ENCODE measurements at regions of chr16 and their contacts with region 1.

Region 1: DNA sequence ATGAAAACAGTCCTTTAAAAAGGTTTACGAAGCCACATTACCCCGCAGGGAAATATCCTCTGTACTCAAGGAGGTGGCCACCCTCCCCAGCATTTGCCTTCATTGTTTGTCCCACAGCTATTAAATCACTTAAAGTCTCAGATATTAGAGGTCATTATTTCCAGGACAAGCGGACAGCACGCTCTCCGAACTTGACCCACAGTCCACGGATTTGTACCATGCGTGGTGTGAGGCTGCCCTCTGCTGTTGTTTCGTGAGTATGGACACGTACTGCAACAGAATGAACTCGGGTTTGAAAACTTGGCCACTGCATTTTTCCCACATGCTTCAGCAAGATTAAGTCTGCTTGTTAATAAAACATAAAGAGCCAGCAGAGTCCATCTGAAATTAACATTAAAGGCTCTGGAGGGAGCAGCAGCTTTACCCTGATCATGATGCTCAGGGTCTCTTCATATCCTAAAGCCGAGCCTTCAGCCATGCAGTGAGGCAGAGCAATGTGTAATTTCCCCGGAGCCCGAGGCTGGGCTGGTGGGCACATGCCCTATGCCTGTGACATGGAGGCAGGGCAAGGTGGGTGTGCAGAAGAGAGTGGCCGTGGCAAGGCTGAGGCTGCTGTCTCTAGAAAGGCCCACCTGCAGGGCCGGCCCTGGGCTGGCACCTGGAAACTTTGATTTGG is 19.7 kb downstream of the MEAK7 start:
- DNase-seq: peak; percentile 66 to 76
- ATAC-seq: peak; percentile 67 to 89 (median 84)
- H3K4me3 ChIP-seq: no peak overlapping the region
- H3K27ac ChIP-seq: no peak overlapping the region
- H3K4me1 ChIP-seq: peaks cover 0 to 21% (median 0%) of the 10 kb centered on the region in 9 donors
- H3K27me3 ChIP-seq: no peaks in the 10 kb centered on the region
- CTCF ChIP-seq: peak; percentile 62 to 92 (median 86)

Region 2: DNA sequence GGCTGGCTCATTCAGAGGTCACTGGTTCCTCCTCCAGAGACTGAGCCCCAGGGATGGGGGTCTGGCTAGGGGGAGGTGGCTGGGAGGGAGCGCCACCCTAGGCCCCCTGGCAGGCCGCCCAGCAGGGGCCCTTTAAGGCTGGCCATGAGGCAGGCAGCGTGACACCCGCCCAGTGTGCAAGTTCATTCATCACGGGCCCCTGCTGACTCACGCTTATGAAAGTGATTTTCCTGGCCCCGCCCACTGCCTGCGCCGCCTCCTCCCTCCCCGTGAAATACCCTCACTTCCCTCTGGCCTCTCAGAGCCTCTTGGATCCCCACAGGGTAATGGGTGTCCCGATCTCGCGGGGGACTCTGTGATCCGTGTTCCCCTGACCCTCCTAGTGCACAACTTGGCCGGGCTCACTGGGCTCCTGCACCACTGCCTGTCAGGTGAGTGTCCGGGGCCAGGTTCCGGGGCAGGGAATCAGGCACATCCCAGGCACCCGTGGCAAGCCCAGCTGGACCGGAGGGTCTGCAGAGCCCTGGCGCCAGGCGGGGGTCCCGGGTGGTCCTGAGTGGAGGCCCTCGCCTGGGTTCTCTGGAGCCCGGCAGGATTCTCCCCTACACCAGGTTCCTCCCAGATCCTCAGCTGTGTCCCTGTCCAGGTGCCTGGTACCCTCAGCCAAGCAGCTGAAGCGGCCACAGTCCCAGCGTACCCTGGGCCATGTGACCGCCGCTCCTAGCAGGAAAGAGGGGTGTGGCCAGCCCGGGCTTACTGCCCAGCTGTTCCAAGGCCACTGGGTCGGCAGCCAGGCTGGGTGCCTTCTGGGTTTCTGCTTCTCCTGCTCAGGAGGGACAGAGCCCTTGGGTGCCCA is 531.5 kb before region 1 on chr16 and contains the start of gene OSGIN1:
- intact Hi-C with region 1: loop called in 3 of 10 experiments (anchors 10 kb)
- DNase-seq: peak; percentile 90 to 94
- ATAC-seq: peak; percentile 90 to 96 (median 94)
- H3K4me3 ChIP-seq: peak within 1 kb of the TSS; percentile 43 to 73 (median 63)
- H3K27ac ChIP-seq: peak within 1 kb of the TSS; percentile 78 to 97 (median 92)
- H3K4me1 ChIP-seq: peaks cover 11 to 45% (median 31%) of the 10 kb centered on the region in 9 donors
- H3K27me3 ChIP-seq: no peaks in the 10 kb centered on the region
- CTCF ChIP-seq: no peak
- total RNA-seq, gene OSGIN1: 3.2 to 14.5 (median 5.3) TPM

Region 3: GRCh38 chr16:84084570-84085270 is 400.0 kb before region 1 on chr16:
- intact Hi-C with region 1: loop called in 2 of 10 experiments (anchors 10 kb)
- DNase-seq: peak; percentile 43 to 64
- ATAC-seq: peak in 7 of 8 donors; percentile 9 to 50 (median 40)
- H3K4me3 ChIP-seq: no peak overlapping the region
- H3K27ac ChIP-seq: peak overlapping the region in 6 of 10 donors; percentile 3 to 77 (median 67)
- H3K4me1 ChIP-seq: peaks cover 0 to 54% (median 25%) of the 10 kb centered on the region in 9 donors
- H3K27me3 ChIP-seq: no peaks in the 10 kb centered on the region
- CTCF ChIP-seq: peak; percentile 30 to 74 (median 66)

Region 4: DNA sequence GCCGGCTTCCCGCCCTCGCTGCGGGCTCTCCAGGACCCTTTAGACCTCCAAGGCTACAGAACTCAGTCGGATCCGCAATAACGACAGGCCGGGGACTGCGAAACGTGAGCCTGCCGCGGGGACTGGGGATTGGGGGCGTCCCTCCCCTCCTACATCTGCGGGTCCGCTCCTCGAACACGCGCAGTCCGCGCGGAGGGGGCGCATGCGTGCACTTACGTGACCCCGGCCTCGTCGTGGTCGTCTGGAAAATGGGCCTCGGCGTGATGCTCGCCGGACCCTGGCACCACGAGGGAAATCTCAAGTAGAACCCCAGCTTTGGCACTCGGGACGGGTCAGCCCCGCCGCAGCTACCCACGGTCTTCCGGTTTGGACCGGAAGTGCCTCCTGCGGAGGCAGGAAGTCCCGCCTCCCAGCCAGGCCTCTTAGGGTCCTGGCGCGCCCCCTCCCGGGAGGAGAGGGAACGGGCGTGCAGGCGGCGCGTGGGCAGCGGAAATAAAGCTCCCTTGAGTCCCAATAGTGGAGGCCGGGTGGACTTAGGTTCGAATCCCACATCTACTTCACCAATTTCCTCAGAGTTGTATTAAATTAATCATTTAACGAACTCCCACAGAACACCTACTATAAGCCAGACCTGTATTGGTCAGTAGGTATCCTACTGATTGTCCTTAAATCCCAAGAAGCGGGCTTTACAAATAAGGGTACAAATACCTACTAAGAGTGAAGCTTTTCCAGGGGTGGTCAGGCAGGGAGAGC is 297.9 kb before region 1 on chr16 and contains the start of gene TAF1C:
- intact Hi-C with region 1: loop called in 2 of 10 experiments (anchors 10 kb)
- DNase-seq: peak; percentile 89 to 94
- ATAC-seq: peak; percentile 92 to 98 (median 95)
- H3K4me3 ChIP-seq: peak within 1 kb of the TSS; percentile 67 to 99 (median 90)
- H3K27ac ChIP-seq: peak within 1 kb of the TSS; percentile 64 to 90 (median 85)
- H3K4me1 ChIP-seq: peaks cover 15 to 45% (median 22%) of the 10 kb centered on the region in 9 donors
- H3K27me3 ChIP-seq: no peaks in the 10 kb centered on the region
- CTCF ChIP-seq: peak; percentile 91 to 99 (median 98)
- total RNA-seq, gene TAF1C: 14.2 to 34.0 (median 20.9) TPM

Region 5: DNA sequence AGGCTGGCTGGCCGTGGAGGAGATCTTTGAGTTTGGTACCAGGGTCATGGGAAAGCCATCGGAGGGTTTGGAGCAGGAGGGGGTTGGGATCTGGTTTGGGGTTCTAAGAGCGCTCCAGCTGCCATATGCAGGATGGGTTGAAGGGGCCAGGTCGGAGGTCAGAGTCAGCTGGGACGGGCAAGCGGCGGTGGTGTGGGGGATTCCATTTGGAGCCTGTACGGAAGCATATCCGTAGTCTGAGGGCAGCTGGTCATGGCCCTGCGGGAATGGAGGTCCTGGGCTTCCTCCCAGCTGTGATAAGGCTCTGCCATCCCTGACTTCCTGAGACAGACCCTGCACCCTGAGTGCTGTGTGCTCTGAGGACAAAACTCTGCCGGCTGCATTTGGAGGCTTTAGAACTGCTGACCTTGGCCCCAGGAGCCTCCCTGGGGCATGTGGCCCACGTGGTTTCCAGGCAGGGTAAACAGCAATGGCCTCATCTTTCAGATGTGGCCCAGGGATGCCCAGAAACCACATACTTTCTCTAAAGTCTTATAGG is 69.9 kb before region 1 on chr16:
- intact Hi-C with region 1: loop called in 1 of 10 experiments (anchors 2 kb)
- DNase-seq: peak in 1 of 2 donors; percentile 25
- ATAC-seq: peak in 6 of 8 donors; percentile 39 to 71 (median 55)
- H3K4me3 ChIP-seq: no peak overlapping the region
- H3K27ac ChIP-seq: no peak overlapping the region
- H3K4me1 ChIP-seq: peaks cover 0 to 12% (median 0%) of the 10 kb centered on the region in 9 donors
- H3K27me3 ChIP-seq: peaks cover 0 to 15% (median 0%) of the 10 kb centered on the region in 7 donors
- CTCF ChIP-seq: no peak

Measured in heart right ventricle (tissue), 16 donors.